CD4-positive, alpha-beta T cell (primary cell): ENCODE measurements at regions of chr16 and their contacts with region 1.

Region 1: GRCh38 chr16:68328151-68328859 is 17.5 kb downstream of the PRMT7 start:
- DNase-seq: peak; percentile 67 to 91 (median 74)
- ATAC-seq: peak; percentile 100
- H3K4me3 ChIP-seq: no peak overlapping the region
- H3K4me3 Mint-ChIP-seq: no peak overlapping the region
- H3K27ac ChIP-seq: no peak overlapping the region
- H3K27ac Mint-ChIP-seq: peak overlapping the region; percentile 1
- H3K4me1 ChIP-seq: peaks cover 19% of the 10 kb centered on the region
- H3K4me1 Mint-ChIP-seq: peaks cover 21% of the 10 kb centered on the region
- H3K27me3 ChIP-seq: no peaks in the 10 kb centered on the region
- H3K27me3 Mint-ChIP-seq: no peaks in the 10 kb centered on the region
- CTCF ChIP-seq: peak; percentile 92

Region 2: GRCh38 chr16:68237243-68238028 is 90.9 kb before region 1 on chr16:
- CTCF ChIA-PET with region 1: interaction called, 16 read pairs
- POLR2A ChIA-PET with region 1: interaction called, 3 read pairs
- intact Hi-C with region 1: loop called (anchors 1 kb)
- DNase-seq: peak; percentile 75 to 96 (median 85)
- ATAC-seq: peak; percentile 78
- H3K4me3 ChIP-seq: peak overlapping the region; percentile 66
- H3K4me3 Mint-ChIP-seq: peak overlapping the region; percentile 95
- H3K27ac ChIP-seq: no peak overlapping the region
- H3K27ac Mint-ChIP-seq: peak overlapping the region; percentile 77
- H3K4me1 ChIP-seq: peaks cover 41% of the 10 kb centered on the region
- H3K4me1 Mint-ChIP-seq: peaks cover 35% of the 10 kb centered on the region
- H3K27me3 ChIP-seq: no peaks in the 10 kb centered on the region
- H3K27me3 Mint-ChIP-seq: no peaks in the 10 kb centered on the region
- CTCF ChIP-seq: no peak

Region 3: DNA sequence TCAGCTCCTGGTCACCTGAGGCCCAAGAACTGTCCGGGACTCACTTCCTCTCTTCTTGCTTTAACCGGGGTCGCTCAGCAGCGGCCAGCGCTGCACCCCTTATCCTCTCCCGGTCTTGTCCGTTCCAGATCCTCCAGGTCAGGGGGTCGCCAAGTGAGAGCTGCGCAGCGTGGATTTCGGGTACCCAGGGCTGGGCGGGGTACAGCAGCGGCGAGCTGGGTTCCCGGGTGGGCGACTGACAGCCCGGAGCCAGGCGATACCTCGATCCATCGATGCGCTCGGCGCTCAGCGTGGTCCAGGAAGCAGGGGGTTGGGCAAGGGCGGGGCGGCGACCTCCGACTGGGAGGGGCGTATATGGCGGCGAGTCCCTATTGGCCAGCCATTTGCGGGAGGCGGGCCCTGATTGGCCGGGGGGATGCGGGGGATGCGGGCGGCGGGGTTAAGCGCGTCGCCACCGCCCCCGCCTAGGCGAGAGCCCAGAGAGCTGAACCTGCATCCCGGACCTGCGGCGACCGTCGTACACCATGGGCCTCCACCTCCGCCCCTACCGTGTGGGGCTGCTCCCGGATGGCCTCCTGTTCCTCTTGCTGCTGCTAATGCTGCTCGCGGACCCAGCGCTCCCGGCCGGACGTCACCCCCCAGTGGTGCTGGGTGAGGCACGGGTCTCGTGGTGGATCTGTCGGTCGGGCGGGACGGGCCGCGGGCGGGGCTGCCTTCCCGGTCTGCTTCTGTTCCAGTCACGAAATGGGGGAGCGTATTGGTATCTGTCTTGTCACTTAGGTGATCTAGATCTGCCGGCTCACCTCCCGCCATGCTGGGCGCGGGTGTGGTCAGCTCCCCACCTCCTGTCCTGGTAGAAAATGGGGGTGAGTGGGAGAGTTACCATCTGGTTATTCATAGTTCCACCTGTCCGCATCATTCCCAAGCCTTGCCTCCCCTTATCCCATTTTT is 83.1 kb before region 1 on chr16 and contains the start of gene PLA2G15:
- CTCF ChIA-PET with region 1: interaction called, 15 read pairs
- POLR2A ChIA-PET with region 1: interaction called, 3 read pairs
- intact Hi-C with region 1: loop called (anchors 1 kb)
- DNase-seq: peak; percentile 94 to 99 (median 96)
- ATAC-seq: peak; percentile 99
- H3K4me3 ChIP-seq: peak within 1 kb of the TSS; percentile 94
- H3K4me3 Mint-ChIP-seq: peak within 1 kb of the TSS; percentile 99
- H3K27ac ChIP-seq: peak within 1 kb of the TSS in 1 of 2 donors; percentile 21
- H3K27ac Mint-ChIP-seq: peak within 1 kb of the TSS; percentile 50
- H3K4me1 ChIP-seq: peaks cover 29% of the 10 kb centered on the region
- H3K4me1 Mint-ChIP-seq: peaks cover 17% of the 10 kb centered on the region
- H3K27me3 ChIP-seq: no peaks in the 10 kb centered on the region
- H3K27me3 Mint-ChIP-seq: no peaks in the 10 kb centered on the region
- CTCF ChIP-seq: no peak
- total RNA-seq, gene PLA2G15: 4.3 to 4.7 TPM

Region 4: DNA sequence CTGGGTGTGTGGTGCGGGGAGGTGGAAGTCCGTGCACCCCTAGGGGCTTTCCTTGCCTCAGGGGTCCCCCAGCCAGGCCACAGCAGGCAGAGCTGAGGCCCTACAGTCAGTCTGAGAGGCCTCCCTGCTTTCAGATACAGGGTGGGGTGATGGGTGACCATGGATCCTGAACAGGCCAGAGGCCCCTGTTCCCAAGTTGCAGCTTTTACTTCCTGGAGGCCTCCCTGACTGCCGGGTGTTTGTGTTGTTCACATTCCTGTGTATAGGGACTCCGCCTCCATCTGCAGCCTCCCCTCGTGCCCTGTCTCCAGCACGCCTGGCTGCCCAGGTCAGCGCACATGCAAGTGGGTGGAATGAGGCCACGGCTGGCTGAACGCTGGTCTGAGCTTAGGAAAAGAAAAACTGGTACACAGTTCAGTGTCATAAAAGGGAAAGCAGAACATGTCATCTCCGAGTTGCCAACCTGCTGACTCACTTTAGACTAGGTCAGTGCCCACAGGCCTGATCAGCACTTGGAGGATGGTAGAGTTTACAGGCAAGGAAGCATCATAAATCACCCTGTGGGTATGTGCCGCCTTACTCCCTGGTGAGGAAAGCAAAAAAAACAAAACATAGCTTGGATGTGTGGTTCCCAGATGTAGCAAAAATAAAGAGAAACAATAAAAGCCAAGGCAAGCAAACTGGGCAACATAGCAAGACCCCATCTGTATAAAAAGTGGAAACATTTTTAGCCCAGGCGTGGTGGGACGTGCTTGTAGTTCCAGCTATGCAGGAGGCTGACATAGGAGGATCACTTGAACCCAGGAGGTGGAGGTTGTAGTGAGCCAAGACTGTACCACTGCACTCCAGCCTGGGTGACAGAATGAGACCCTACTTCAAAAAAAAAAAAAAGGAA is 70.2 kb before region 1 on chr16:
- CTCF ChIA-PET with region 1: interaction called, 148 read pairs
- POLR2A ChIA-PET with region 1: interaction called, 18 read pairs
- intact Hi-C with region 1: loop called (anchors 1 kb)
- DNase-seq: peak in 1 of 14 experiments; percentile 20
- ATAC-seq: no peak
- H3K4me3 ChIP-seq: no peak overlapping the region
- H3K4me3 Mint-ChIP-seq: no peak overlapping the region
- H3K27ac ChIP-seq: no peak overlapping the region
- H3K27ac Mint-ChIP-seq: no peak overlapping the region
- H3K4me1 ChIP-seq: peaks cover 23% of the 10 kb centered on the region
- H3K4me1 Mint-ChIP-seq: peaks cover 20% of the 10 kb centered on the region
- H3K27me3 ChIP-seq: no peaks in the 10 kb centered on the region
- H3K27me3 Mint-ChIP-seq: no peaks in the 10 kb centered on the region
- CTCF ChIP-seq: no peak

Region 5: DNA sequence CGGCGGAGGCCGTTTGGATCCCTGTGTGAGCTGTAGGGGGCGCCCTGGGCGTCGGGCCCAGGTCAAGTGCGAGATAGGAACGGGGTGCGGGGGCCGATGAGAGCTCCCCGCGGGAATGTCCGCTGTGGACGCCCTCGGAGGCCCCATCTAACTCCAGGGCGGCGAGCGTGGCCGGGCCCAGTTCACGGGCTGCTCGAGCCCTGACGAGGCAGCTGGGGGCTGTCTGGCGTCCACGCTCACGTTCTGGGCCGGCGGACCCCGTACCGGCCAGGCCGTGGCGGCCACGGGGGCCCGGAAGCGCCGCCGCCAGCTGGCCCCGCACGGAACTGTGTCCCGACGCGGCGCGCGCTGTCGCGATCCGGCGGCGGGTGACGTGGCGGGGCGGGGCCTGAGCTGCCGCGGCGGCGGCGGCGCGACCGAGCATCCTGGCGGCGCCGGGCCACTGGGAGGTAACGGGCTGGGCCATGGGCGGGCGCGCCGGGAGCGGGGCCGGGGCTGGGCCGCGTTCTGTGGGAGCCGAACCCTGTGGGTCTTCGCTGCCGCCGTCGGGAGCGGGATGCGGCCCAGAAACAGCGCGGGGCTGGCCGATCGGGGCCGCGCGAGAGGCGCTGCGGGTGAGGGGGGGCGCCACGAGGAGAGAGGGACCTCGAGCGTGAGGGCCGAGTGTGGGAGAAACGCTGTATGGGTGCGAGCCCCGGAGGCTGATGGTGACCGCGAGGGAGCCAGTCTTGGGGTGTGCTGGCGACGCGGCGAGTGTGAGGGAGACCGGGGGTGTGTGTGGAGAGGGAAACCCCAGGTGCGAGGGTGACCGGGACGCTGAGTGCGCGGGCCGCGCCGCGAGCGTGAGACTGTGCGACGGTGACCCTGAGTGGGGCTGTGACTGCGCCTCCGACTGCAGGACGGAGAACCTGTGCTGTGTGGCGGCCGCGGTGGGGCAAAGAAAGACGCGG is 63.9 kb before region 1 on chr16 and contains the start of gene SLC7A6:
- CTCF ChIA-PET with region 1: interaction called, 148 read pairs
- POLR2A ChIA-PET with region 1: interaction called, 18 read pairs
- intact Hi-C with region 1: loop called (anchors 1 kb)
- DNase-seq: peak; percentile 59 to 94 (median 76)
- ATAC-seq: peak; percentile 69
- H3K4me3 ChIP-seq: peak within 1 kb of the TSS; percentile 74
- H3K4me3 Mint-ChIP-seq: peak within 1 kb of the TSS; percentile 98
- H3K27ac ChIP-seq: peak within 1 kb of the TSS; percentile 96 to 99
- H3K27ac Mint-ChIP-seq: peak within 1 kb of the TSS; percentile 94
- H3K4me1 ChIP-seq: peaks cover 62% of the 10 kb centered on the region
- H3K4me1 Mint-ChIP-seq: peaks cover 62% of the 10 kb centered on the region
- H3K27me3 ChIP-seq: no peaks in the 10 kb centered on the region
- H3K27me3 Mint-ChIP-seq: no peaks in the 10 kb centered on the region
- CTCF ChIP-seq: peak; percentile 63
- total RNA-seq, gene SLC7A6: 187 to 197 TPM

Region 6: GRCh38 chr16:68289621-68290329 is 38.5 kb before region 1 on chr16:
- CTCF ChIA-PET with region 1: interaction called, 14 read pairs
- POLR2A ChIA-PET with region 1: interaction called, 3 read pairs
- intact Hi-C with region 1: no loop called
- DNase-seq: peak in 10 of 14 experiments; percentile 27 to 68 (median 40)
- ATAC-seq: peak; percentile 38
- H3K4me3 ChIP-seq: no peak overlapping the region
- H3K4me3 Mint-ChIP-seq: peak overlapping the region; percentile 70
- H3K27ac ChIP-seq: peak overlapping the region; percentile 74 to 83
- H3K27ac Mint-ChIP-seq: peak overlapping the region; percentile 87
- H3K4me1 ChIP-seq: peaks cover 93% of the 10 kb centered on the region
- H3K4me1 Mint-ChIP-seq: peaks cover 87% of the 10 kb centered on the region
- H3K27me3 ChIP-seq: no peaks in the 10 kb centered on the region
- H3K27me3 Mint-ChIP-seq: no peaks in the 10 kb centered on the region
- CTCF ChIP-seq: no peak

Region 7: GRCh38 chr16:68310761-68311511 is 17.4 kb before region 1 on chr16 and contains the starts of genes PRMT7 and SLC7A6OS:
- CTCF ChIA-PET with region 1: interaction called, 7 read pairs
- POLR2A ChIA-PET with region 1: interaction called, 6 read pairs
- intact Hi-C with region 1: loop called (anchors 1 to 2 kb)
- DNase-seq: peak; percentile 82 to 97 (median 90)
- ATAC-seq: peak; percentile 98
- H3K4me3 ChIP-seq: peak within 1 kb of the TSS; percentile 100
- H3K4me3 Mint-ChIP-seq: peak within 1 kb of the TSS; percentile 100
- H3K27ac ChIP-seq: peak within 1 kb of the TSS; percentile 73 to 79
- H3K27ac Mint-ChIP-seq: peak within 1 kb of the TSS; percentile 91
- H3K4me1 ChIP-seq: peaks cover 49% of the 10 kb centered on the region
- H3K4me1 Mint-ChIP-seq: peaks cover 62% of the 10 kb centered on the region
- H3K27me3 ChIP-seq: no peaks in the 10 kb centered on the region
- H3K27me3 Mint-ChIP-seq: no peaks in the 10 kb centered on the region
- CTCF ChIP-seq: peak; percentile 14
- total RNA-seq, gene PRMT7: 46.3 to 51.0 TPM
- total RNA-seq, gene SLC7A6OS: 29.0 to 32.1 TPM